ENCODE measurements at regions of chr10 and their contacts with region 1.

Region 1: DNA sequence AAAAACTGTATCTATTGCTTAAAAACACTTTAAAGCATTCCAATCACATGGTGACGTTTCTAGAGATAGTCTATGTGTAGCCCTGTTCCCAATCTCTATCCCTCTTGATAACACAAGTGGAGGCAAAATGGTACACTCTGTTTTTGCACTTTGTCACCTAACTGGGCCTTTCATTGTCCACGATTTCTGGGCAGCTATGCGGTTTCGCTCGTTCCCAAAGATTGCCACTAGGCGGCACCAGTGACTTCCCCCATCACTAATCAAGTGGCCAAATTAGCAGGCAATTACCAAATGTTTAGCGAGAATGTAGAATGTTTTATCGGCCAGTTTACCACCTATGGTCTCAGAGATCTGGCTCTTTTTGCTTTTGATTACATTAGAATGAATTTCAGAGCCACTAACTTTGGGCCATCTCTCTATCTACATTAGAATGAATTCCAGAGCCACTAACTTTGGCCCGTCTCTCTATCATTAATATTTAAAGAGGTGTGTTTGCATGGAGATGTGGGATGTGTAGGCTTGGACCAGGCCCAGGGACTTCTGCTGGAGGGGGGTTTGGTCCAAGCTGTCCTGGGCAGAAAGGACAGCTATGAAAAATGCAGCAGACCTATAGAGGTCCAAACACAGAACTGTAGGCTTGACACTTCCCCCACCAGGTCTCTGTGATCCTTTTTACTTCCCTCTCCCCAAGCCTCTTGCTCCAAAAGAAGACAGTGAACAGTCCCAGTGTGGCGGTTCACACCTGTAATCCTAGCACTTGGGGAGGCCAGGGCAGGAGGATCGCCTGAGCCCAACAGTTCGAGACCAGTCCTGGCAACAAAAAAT is 90.1 kb downstream of the EPC1 start:
- DNase-seq: peak; percentile 33 to 47
- ATAC-seq: peak; percentile 71 to 74; a peak in 5 of 6 replicates
- H3K4me3 ChIP-seq: no peak overlapping the region
- H3K27ac ChIP-seq: no peak overlapping the region
- H3K4me1 ChIP-seq: peaks cover 10% of the 10 kb centered on the region
- CTCF ChIP-seq: peak; percentile 86
- EP300 ChIP-seq: no peak
- POLR2A ChIP-seq: no peak
- RAD21 ChIP-seq: peak; percentile 77

Region 2: DNA sequence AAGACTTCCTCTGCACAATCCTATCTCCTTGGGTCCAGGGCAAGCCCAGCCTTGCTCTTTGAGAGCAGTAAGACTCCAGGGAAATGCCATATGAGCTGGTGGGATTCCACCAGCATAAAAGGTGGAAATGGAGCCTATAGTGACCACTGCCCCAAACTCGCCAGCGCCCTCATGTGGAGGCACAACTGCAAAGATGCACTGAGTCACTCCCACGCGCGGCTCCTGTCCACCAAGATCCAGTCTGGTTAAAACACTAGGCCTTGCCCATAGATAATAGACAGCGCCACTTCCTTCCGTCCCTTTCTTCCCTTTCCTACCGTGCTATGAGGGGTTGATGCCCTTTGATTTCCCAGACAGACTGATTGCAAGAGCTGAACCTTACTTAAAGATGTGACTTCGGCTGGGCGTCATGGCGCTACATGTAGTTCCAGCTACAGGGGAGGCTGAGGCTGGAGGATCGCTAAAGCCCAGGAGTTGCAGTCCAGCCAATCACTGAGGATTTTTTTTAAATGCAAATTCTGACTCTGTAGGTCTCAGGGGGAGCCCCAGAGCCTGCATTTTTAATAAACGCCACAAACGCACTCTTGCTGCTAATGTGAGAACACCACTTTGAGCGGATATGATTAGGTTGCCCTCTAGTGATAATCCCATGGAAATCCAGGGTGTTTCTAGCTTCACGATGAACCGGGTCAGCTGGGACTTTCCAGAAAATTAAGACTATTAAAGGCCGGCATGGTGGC is 46.3 kb before region 1 on chr10:
- CTCF ChIA-PET with region 1: interaction called, 10 read pairs
- POLR2A ChIA-PET with region 1: no interaction called
- DNase-seq: peak; percentile 75 to 78
- ATAC-seq: peak; percentile 94 to 97
- H3K4me3 ChIP-seq: no peak overlapping the region
- H3K27ac ChIP-seq: no peak overlapping the region
- H3K4me1 ChIP-seq: no peaks in the 10 kb centered on the region
- CTCF ChIP-seq: peak; percentile 60
- EP300 ChIP-seq: no peak
- POLR2A ChIP-seq: no peak
- RAD21 ChIP-seq: peak; percentile 68 to 76

Region 3: DNA sequence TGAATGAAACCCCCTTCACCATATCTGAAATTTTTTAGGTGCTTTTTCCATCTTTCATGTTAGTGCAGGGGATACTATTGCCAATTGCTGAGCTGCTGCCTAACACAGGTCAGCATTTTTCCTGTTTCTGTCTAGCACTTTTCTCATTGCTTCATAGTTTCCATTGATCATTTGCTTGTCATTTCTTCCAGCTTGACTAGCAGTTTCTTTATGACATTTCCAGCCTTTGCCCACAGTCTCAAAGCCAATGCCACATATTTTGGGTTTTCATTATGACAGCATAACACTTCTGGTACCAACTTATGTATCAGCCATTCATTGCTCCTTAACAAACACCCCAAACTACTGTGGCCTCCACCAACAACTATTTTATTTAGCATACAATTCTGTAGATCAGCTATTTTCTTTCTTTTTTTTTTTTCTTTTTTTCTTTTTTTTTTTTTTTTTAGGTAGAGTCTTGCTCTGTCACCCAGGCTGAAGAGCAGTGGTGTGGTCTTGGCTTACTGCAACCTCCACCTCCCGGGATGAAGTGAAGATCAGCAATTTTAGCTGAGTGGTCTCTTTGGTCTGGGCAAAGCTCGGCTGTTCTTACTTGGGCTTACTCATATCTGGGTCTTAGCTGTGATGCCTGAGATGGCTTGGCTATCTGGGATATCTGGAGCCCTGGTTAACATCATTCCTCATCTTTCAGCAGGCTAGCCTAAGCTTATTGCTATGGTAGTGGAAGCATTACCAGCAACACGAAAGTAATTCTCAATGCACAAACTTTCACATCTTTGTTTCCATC is 12.2 kb before region 1 on chr10:
- CTCF ChIA-PET with region 1: interaction called, 15 read pairs
- POLR2A ChIA-PET with region 1: no interaction called
- DNase-seq: no peak
- ATAC-seq: no peak
- H3K4me3 ChIP-seq: no peak overlapping the region
- H3K27ac ChIP-seq: no peak overlapping the region
- H3K4me1 ChIP-seq: no peaks in the 10 kb centered on the region
- CTCF ChIP-seq: no peak
- EP300 ChIP-seq: no peak
- POLR2A ChIP-seq: no peak
- RAD21 ChIP-seq: no peak

Region 4: GRCh38 chr10:32271617-32272016 is 14.8 kb after region 1 on chr10:
- CTCF ChIA-PET with region 1: interaction called, 21 read pairs
- POLR2A ChIA-PET with region 1: no interaction called
- DNase-seq: no peak
- ATAC-seq: no peak
- H3K4me3 ChIP-seq: no peak overlapping the region
- H3K27ac ChIP-seq: no peak overlapping the region
- H3K4me1 ChIP-seq: no peaks in the 10 kb centered on the region
- CTCF ChIP-seq: no peak
- EP300 ChIP-seq: no peak
- POLR2A ChIP-seq: no peak
- RAD21 ChIP-seq: no peak

Region 5: DNA sequence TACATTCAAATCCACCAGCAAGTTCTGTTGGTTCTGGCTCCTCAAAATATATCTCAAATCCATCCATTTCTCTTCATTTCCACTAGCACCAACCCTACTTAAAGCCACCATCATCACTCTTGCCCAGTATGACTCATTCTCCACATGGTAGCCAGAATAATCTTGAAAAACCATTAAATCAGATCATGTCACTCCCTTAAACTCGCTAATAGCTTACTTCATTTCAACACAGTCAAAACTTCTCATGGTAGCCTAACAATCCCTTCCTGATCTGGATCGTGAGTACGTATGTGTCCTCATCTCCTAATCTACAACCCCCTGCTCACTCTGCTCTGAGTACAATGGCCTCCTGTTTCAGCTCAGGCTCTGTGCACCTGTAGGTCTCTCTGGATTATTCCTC is 81.4 kb after region 1 on chr10:
- CTCF ChIA-PET with region 1: interaction called, 21 read pairs
- POLR2A ChIA-PET with region 1: no interaction called
- DNase-seq: no peak
- ATAC-seq: no peak
- H3K4me3 ChIP-seq: no peak overlapping the region
- H3K27ac ChIP-seq: no peak overlapping the region
- H3K4me1 ChIP-seq: peaks cover 20% of the 10 kb centered on the region
- CTCF ChIP-seq: no peak
- EP300 ChIP-seq: no peak
- POLR2A ChIP-seq: no peak
- RAD21 ChIP-seq: no peak

Region 6: DNA sequence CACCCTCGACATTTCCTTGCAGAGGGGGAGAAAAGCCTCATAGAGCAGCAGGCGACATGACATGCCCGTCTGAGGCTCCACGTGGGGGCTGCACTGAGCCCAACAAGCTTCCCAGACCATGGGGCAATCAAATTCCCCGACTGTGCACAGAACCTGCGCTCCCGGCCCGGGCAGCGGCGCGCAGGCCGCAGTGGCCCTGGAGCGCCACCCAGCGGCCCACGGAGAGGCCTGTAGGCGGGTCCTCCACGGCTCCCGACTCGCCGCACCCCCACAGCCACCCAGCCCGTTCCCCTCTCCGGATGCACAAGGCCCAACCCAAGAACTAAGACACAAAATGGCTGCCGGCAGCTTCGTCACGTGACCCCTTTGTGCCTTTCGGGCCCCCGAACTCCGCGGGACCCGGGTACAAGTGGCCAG is 89.3 kb after region 1 on chr10:
- CTCF ChIA-PET with region 1: interaction called, 12 read pairs
- POLR2A ChIA-PET with region 1: interaction called, 3 read pairs
- DNase-seq: peak; percentile 93 to 97
- ATAC-seq: peak; percentile 89 to 96
- H3K4me3 ChIP-seq: peak overlapping the region; percentile 78
- H3K27ac ChIP-seq: peak overlapping the region; percentile 99 to 100
- H3K4me1 ChIP-seq: peaks cover 56% of the 10 kb centered on the region; the same call in 2 of the 3 replicates
- CTCF ChIP-seq: peak; percentile 95
- EP300 ChIP-seq: no peak
- POLR2A ChIP-seq: no peak
- RAD21 ChIP-seq: peak; percentile 72 to 94

Region 7: GRCh38 chr10:32367793-32368453 is 111.1 kb after region 1 on chr10:
- CTCF ChIA-PET with region 1: interaction called, 17 read pairs
- POLR2A ChIA-PET with region 1: no interaction called
- DNase-seq: peak in 1 of 2 experiments; percentile 73
- ATAC-seq: peak; percentile 56 to 68; a peak in 4 of 6 replicates
- H3K4me3 ChIP-seq: no peak overlapping the region
- H3K27ac ChIP-seq: peak overlapping the region in 1 of 2 experiments; percentile 46; a peak in 1 of 6 replicates
- H3K4me1 ChIP-seq: peaks cover 18% of the 10 kb centered on the region
- CTCF ChIP-seq: peak; percentile 90
- EP300 ChIP-seq: no peak
- POLR2A ChIP-seq: no peak
- RAD21 ChIP-seq: peak; percentile 81 to 83